A673 (cell line): ENCODE measurements at regions of chr1 and their contacts with region 1.

Region 1: GRCh38 chr1:96596226-96596922 is 125.2 kb upstream of the PTBP2 start:
- DNase-seq: peak; percentile 74
- H3K4me3 ChIP-seq: no peak overlapping the region
- H3K27ac ChIP-seq: no peak overlapping the region
- H3K4me1 ChIP-seq: no peaks in the 10 kb centered on the region
- H3K27me3 ChIP-seq: no peaks in the 10 kb centered on the region
- CTCF ChIP-seq: peak; percentile 87

Region 2: DNA sequence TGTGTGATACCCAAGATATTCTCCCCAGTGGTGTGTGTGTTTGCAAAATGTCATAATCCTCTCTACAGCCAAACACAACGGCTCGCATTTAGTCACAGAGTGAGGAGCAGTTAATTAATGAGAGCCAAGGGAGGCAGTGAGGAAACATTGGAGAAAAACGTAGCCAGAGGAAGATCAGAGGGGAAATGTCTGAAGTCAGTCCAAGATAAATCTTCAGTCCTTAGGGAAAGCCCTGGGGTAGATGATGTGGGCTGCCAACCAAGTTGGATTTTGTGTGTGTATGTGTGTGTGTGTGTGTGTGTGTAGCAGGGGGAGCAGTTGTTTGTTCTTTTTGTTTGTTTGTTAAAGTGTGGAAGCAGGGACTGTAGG is 75.8 kb before region 1 on chr1:
- CTCF ChIA-PET with region 1: interaction called, 11 read pairs
- POLR2A ChIA-PET with region 1: no interaction called
- intact Hi-C with region 1: no loop called
- DNase-seq: peak; percentile 40
- H3K4me3 ChIP-seq: no peak overlapping the region
- H3K27ac ChIP-seq: no peak overlapping the region
- H3K4me1 ChIP-seq: peaks cover 13% of the 10 kb centered on the region
- H3K27me3 ChIP-seq: no peaks in the 10 kb centered on the region
- CTCF ChIP-seq: no peak

Region 3: GRCh38 chr1:96557336-96557735 is 39.0 kb before region 1 on chr1:
- CTCF ChIA-PET with region 1: no interaction called
- POLR2A ChIA-PET with region 1: no interaction called
- intact Hi-C with region 1: no loop called
- DNase-seq: no peak
- H3K4me3 ChIP-seq: no peak overlapping the region
- H3K27ac ChIP-seq: no peak overlapping the region
- H3K4me1 ChIP-seq: no peaks in the 10 kb centered on the region
- H3K27me3 ChIP-seq: no peaks in the 10 kb centered on the region
- CTCF ChIP-seq: no peak